ENCODE measurements at regions of chr11 and their contacts with region 1.

Region 1: GRCh38 chr11:35144136-35144741 is 5.3 kb downstream of the CD44 start:
- DNase-seq: peak; percentile 62
- H3K4me3 Mint-ChIP-seq: peak overlapping the region; percentile 58
- H3K27ac Mint-ChIP-seq: peak overlapping the region; percentile 95
- H3K4me1 Mint-ChIP-seq: peaks cover 69% of the 10 kb centered on the region
- H3K27me3 Mint-ChIP-seq: no peaks in the 10 kb centered on the region

Region 2: DNA sequence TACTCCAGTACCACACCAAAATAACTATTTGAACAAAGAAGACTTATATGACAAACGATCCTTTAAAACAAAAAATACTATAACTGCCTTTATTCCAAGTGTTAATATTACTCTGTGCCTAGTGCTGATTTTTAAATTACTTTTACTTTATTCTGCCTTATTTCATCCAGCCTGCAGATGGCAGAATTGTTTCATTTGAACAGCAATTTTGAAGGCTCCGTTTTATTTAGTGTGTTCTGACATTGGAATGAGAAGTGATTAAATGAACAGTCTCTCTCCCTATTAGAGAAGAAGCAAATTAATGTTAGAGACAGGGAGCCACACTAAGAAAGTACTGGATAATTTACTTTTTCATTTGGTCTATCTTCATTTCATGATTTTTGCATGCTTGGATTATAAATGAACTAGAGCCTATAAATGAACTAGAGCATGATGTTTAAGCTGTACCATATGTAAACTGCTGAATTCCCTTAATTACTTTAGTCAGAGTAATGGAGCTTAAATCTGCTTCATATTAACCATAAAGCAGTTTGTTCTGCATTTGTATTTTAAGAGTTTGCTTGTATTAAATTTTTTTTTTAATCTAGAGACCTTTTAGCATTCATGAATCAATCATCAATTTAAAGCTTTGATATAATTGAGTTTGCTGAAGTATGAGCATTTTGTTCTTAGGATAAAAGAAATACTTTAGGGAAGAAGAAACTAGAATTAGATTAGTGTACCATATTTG is 218.0 kb before region 1 on chr11:
- intact Hi-C with region 1: loop called (anchors 5 kb)
- DNase-seq: no peak
- H3K4me3 Mint-ChIP-seq: no peak overlapping the region
- H3K27ac Mint-ChIP-seq: no peak overlapping the region
- H3K4me1 Mint-ChIP-seq: peaks cover 15% of the 10 kb centered on the region
- H3K27me3 Mint-ChIP-seq: no peaks in the 10 kb centered on the region

Region 3: DNA sequence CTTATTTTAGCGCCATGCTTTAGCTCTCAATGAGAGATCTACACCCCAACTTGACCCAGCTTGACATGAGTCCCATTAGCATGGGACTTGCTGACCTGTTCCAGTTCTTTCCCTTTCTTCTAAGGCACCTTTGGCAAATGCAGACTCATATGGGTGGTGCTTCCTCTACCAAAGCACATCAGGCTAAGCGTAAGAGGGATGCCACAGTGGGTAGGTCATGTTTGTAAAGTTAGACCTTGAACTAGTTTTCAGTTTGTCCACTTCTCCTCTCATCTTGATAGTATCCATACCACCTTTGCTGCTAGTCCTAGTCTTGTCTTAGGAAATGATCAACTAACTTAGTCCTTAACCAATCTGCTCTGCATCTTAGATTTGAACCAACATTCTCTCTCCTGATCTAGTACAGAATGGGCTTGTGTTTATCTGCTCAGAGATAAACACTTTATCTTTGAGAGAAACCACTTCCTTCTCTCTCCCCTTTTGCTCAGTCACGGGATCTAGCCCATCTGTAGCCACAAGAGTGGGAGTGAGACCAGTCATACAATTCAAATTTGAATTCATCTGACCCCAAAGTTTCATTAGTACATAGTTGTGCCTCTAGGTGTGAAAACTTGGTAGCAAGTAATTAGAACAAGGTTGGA is 77.3 kb before region 1 on chr11:
- intact Hi-C with region 1: loop called (anchors 1 kb)
- DNase-seq: no peak
- H3K4me3 Mint-ChIP-seq: no peak overlapping the region
- H3K27ac Mint-ChIP-seq: peak overlapping the region; percentile 24
- H3K4me1 Mint-ChIP-seq: peaks cover 22% of the 10 kb centered on the region
- H3K27me3 Mint-ChIP-seq: peaks cover 10% of the 10 kb centered on the region

Region 4: DNA sequence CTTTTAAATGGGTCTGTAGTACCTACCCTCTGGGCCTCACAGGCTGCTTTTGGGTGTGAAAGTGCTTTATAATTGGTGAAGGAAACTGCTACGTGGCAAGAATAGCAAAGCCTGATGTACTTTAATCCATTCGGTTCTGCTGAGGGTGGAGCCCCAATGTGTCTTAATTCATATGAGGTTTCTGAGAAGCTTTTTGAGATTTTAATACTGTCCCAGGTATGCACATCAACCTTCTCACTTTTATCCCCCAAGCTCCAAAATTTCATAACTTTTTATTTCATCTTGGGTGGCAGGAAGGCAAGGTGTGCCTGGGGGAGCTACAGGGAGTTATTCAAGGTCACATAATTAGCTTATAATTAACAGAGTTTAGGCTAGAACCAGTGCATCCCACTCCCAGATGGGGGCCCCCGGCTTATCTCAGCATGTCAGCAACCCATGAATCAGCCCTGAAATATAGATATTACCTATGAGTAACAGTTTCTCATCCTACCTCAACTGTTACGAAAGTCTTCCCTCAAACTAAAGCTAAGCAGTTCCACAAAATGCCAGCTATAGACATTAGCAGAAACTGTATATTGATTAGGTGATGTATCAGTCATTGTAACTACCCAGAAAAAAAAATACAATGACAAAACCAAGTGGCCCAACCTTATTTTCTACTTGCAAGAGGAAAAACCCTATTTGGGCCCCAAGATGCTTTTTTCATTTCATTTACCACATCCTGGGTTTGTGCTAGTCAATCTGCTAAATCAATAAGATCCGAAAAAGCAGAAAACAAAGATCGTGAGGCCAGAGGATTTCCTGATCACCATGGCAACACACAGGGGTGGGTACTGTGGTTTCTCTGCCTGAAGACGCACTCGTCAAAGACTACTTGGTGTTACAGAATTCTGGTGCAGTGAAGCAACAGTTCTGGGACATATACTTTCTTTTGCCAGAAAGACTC is 21.5 kb after region 1 on chr11:
- intact Hi-C with region 1: loop called (anchors 1 kb)
- DNase-seq: peak; percentile 91
- H3K4me3 Mint-ChIP-seq: peak overlapping the region; percentile 67
- H3K27ac Mint-ChIP-seq: peak overlapping the region; percentile 98
- H3K4me1 Mint-ChIP-seq: peaks cover 98% of the 10 kb centered on the region
- H3K27me3 Mint-ChIP-seq: no peaks in the 10 kb centered on the region

Region 5: GRCh38 chr11:35272391-35272902 is 128.2 kb after region 1 on chr11:
- intact Hi-C with region 1: loop called (anchors 1 kb)
- DNase-seq: peak; percentile 36
- H3K4me3 Mint-ChIP-seq: peak overlapping the region; percentile 23
- H3K27ac Mint-ChIP-seq: peak overlapping the region; percentile 79
- H3K4me1 Mint-ChIP-seq: peaks cover 57% of the 10 kb centered on the region
- H3K27me3 Mint-ChIP-seq: peaks cover 18% of the 10 kb centered on the region

Measured in activated T-helper 2 cell treated with anti-CD3 and anti-CD28 coated beads, Interferon-gamma antibody, Interleukin-2, Interleukin-4, amounts not matched to agents 10 μg/mL and 5 μg/mL and 100 μg/mL, durations not matched to agents 14 hours and 24 hours and 36 hours (primary cell).